ENCODE measurements at regions of chr4 and their contacts with region 1.

Region 1: GRCh38 chr4:26161030-26161824 is 159.6 kb upstream of the RBPJ start:
- DNase-seq: no peak
- H3K4me3 ChIP-seq: no peak overlapping the region
- H3K27ac ChIP-seq: no peak overlapping the region
- H3K4me1 ChIP-seq: peaks cover 0 to 2% (median 0%) of the 10 kb centered on the region in 4 experiments; a peak in 2 of 7 replicates
- H3K27me3 ChIP-seq: no peaks in the 10 kb centered on the region
- CTCF ChIP-seq: peak; percentile 22 to 60 (median 57)
- EP300 ChIP-seq: no peak
- POLR2A ChIP-seq: no peak
- RAD21 ChIP-seq: peak; percentile 61 to 70

Region 2: GRCh38 chr4:26120098-26120825 is 41.0 kb before region 1 on chr4:
- CTCF ChIA-PET with region 1: no interaction called
- POLR2A ChIA-PET with region 1: no interaction called
- DNase-seq: no peak
- H3K4me3 ChIP-seq: no peak overlapping the region
- H3K27ac ChIP-seq: no peak overlapping the region
- H3K4me1 ChIP-seq: no peaks in the 10 kb centered on the region; a peak in 1 of 7 replicates
- H3K27me3 ChIP-seq: no peaks in the 10 kb centered on the region
- CTCF ChIP-seq: no peak
- EP300 ChIP-seq: no peak
- POLR2A ChIP-seq: no peak
- RAD21 ChIP-seq: no peak

Region 3: GRCh38 chr4:26132858-26133257 is 28.4 kb before region 1 on chr4:
- CTCF ChIA-PET with region 1: interaction called, 16 read pairs
- POLR2A ChIA-PET with region 1: interaction called, 3 read pairs
- DNase-seq: no peak
- H3K4me3 ChIP-seq: no peak overlapping the region
- H3K27ac ChIP-seq: no peak overlapping the region
- H3K4me1 ChIP-seq: no peaks in the 10 kb centered on the region
- H3K27me3 ChIP-seq: no peaks in the 10 kb centered on the region
- CTCF ChIP-seq: peak; percentile 55 to 69 (median 64)
- EP300 ChIP-seq: no peak
- POLR2A ChIP-seq: no peak
- RAD21 ChIP-seq: peak; percentile 58 to 67

Region 4: DNA sequence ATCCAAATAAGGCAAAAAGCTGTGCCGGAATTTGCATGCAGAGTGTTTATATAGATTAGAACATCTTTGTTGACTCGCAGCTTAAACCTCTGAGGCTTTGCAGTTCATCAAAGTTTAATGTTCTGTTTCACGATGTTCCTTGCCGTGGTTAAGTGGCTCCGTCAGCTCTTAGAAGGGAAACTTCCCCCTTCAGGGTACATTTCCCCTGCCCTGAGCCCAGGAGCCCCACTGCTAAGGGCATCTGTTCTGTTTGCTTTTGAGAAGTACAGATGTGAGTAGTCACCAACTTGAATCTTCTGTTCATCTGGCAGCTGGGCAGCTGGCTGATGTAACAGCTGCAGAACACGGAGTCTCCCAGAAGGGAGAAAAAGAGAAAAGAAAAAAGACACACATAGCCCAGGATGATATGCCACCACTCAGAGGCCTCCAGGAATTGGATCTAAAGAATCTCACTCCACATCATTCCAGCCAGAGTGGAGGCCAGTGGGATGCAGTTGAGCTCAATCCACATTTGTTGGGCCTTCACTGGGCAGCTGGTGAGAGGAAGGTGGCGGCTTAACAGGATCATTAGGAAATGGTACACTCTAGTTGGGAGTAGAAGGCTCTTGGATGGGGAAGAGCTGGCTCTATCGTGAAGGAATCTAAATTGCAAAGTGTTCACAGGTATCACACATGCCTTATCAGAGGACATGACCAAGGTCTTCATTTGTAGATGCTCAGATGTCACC is 19.2 kb before region 1 on chr4:
- CTCF ChIA-PET with region 1: interaction called, 16 read pairs
- POLR2A ChIA-PET with region 1: no interaction called
- DNase-seq: no peak
- H3K4me3 ChIP-seq: no peak overlapping the region
- H3K27ac ChIP-seq: no peak overlapping the region
- H3K4me1 ChIP-seq: peaks cover 0 to 3% (median 0%) of the 10 kb centered on the region in 4 experiments; a peak in 2 of 7 replicates
- H3K27me3 ChIP-seq: no peaks in the 10 kb centered on the region
- CTCF ChIP-seq: no peak
- EP300 ChIP-seq: no peak
- POLR2A ChIP-seq: no peak
- RAD21 ChIP-seq: no peak

Region 5: DNA sequence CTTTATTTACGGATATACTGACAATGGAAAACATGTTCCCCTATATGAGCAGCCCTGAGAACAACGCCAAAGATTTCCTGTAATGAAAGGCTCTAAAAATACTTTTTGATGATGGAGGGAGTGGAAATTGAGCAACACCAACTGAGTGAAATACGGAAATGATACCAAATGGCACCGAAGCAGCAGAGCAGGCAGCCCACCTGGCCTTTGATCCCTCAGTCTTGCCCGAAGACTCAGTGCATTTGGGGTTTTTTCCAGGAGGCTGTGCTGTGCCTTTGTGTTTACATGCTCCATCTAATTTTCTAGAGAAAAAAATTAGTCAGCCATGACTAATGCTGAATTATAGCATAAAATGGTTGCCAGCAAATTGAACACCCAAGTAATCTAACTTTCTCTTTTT is 10.3 kb before region 1 on chr4:
- CTCF ChIA-PET with region 1: interaction called, 13 read pairs
- POLR2A ChIA-PET with region 1: no interaction called
- DNase-seq: no peak
- H3K4me3 ChIP-seq: no peak overlapping the region
- H3K27ac ChIP-seq: no peak overlapping the region
- H3K4me1 ChIP-seq: no peaks in the 10 kb centered on the region
- H3K27me3 ChIP-seq: no peaks in the 10 kb centered on the region
- CTCF ChIP-seq: no peak
- EP300 ChIP-seq: no peak
- POLR2A ChIP-seq: no peak
- RAD21 ChIP-seq: no peak

Region 6: GRCh38 chr4:26171941-26172340 is 10.7 kb after region 1 on chr4:
- CTCF ChIA-PET with region 1: interaction called, 50 read pairs
- POLR2A ChIA-PET with region 1: no interaction called
- DNase-seq: no peak
- H3K4me3 ChIP-seq: no peak overlapping the region
- H3K27ac ChIP-seq: no peak overlapping the region
- H3K4me1 ChIP-seq: peaks cover 0 to 4% (median 3%) of the 10 kb centered on the region in 4 experiments; a peak in 2 of 7 replicates
- H3K27me3 ChIP-seq: no peaks in the 10 kb centered on the region; a peak in 1 of 7 replicates
- CTCF ChIP-seq: no peak
- EP300 ChIP-seq: no peak
- POLR2A ChIP-seq: no peak
- RAD21 ChIP-seq: no peak